ENCODE measurements at regions of chr16 and their contacts with region 1.

Region 1: GRCh38 chr16:4802659-4803287 is 340 bp upstream of the ROGDI start:
- DNase-seq: peak; percentile 92
- ATAC-seq: peak; percentile 94
- H3K4me3 Mint-ChIP-seq: peak overlapping the region; percentile 77
- H3K27ac Mint-ChIP-seq: peak overlapping the region; percentile 72
- H3K4me1 Mint-ChIP-seq: peaks cover 10% of the 10 kb centered on the region
- H3K27me3 Mint-ChIP-seq: no peaks in the 10 kb centered on the region

Region 2: GRCh38 chr16:4517812-4518680 is 284.7 kb before region 1 on chr16:
- CTCF ChIA-PET with region 1: no interaction called
- DNase-seq: no peak
- ATAC-seq: no peak
- H3K4me3 Mint-ChIP-seq: no peak overlapping the region
- H3K27ac Mint-ChIP-seq: peak overlapping the region; percentile 39
- H3K4me1 Mint-ChIP-seq: peaks cover 40% of the 10 kb centered on the region
- H3K27me3 Mint-ChIP-seq: no peaks in the 10 kb centered on the region

Region 3: DNA sequence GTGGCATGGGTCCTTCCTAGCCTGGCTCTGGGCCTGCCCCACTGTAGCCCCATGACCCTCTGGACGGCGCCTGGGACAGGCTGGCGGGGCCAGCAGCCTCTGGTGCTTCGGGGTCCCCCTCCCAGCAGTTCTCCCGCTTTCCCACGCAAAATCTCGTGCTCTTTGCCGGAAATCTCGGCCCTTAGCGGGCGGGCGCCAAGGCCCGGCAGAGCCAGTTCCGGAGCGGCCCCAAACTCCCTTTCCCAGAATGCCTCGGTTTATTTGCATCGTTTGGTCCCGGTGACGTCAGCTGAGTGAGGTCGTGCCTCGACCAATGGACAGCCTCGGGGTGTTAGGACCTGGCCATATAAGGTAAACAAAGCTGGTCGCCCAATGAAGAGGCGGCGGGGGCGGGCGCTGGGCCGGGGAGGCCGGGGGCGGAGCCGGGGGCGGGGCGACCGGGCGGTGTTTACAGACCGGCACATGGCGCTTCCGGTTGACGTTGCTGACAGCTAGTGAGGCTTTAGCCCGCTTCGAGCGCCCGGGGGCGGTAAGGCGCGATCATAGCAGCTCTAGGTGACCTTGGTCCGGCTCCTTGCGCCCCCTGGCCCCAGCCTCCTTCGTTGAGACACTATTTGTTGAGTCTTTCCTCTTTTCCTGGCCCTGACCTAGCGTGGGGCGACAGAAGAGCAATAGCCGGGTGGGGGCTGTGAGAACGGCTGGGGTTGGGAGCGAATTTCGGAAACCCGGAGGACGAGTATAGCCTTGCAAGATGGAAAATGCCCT is 186.5 kb before region 1 on chr16:
- CTCF ChIA-PET with region 1: no interaction called
- DNase-seq: peak; percentile 100
- ATAC-seq: peak; percentile 90
- H3K4me3 Mint-ChIP-seq: peak overlapping the region; percentile 86
- H3K27ac Mint-ChIP-seq: peak overlapping the region; percentile 95
- H3K4me1 Mint-ChIP-seq: peaks cover 29% of the 10 kb centered on the region
- H3K27me3 Mint-ChIP-seq: no peaks in the 10 kb centered on the region

Region 4: GRCh38 chr16:4768549-4769305 is 34.0 kb before region 1 on chr16:
- CTCF ChIA-PET with region 1: interaction called, 12 read pairs
- DNase-seq: peak; percentile 93
- ATAC-seq: peak; percentile 81
- H3K4me3 Mint-ChIP-seq: peak overlapping the region; percentile 82
- H3K27ac Mint-ChIP-seq: peak overlapping the region; percentile 85
- H3K4me1 Mint-ChIP-seq: peaks cover 24% of the 10 kb centered on the region
- H3K27me3 Mint-ChIP-seq: no peaks in the 10 kb centered on the region

Measured in activated CD8-positive, alpha-beta memory T cell treated with anti-CD3 and anti-CD28 coated beads, Interleukin-2, amount 10 ng/mL, durations not matched to agents 7 days and 5 days (primary cell).